ENCODE measurements at regions of chr2 and their contacts with region 1.

Region 1: GRCh38 chr2:70340921-70341765 is 39.3 kb upstream of the FAM136A start:
- DNase-seq: peak; percentile 44
- H3K4me3 Mint-ChIP-seq: no peak overlapping the region
- H3K27ac Mint-ChIP-seq: no peak overlapping the region
- H3K4me1 Mint-ChIP-seq: no peaks in the 10 kb centered on the region
- H3K27me3 Mint-ChIP-seq: peaks cover 1% of the 10 kb centered on the region

Region 2: DNA sequence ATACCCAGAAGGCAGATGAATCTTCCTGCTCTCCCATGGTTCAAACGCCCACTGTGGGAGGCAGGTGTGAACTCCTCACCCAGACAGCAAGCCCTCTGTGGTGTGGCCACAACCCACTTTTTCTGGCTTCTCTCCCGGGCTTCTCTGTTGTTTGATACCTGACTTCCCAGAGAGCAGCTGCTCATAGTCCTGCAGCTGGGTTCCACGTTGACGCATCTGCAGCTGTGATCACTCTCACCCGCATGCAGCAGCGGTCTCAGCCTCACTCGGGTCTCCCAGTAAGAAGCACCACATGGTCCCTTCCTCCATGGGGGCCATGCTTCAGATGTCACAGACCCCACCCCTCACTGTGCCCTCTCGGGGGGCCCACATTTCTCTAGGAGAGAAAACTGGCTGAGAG is 383.2 kb before region 1 on chr2:
- CTCF ChIA-PET with region 1: no interaction called
- POLR2A ChIA-PET with region 1: no interaction called
- intact Hi-C with region 1: no loop called
- DNase-seq: no peak
- H3K4me3 Mint-ChIP-seq: no peak overlapping the region
- H3K27ac Mint-ChIP-seq: no peak overlapping the region
- H3K4me1 Mint-ChIP-seq: no peaks in the 10 kb centered on the region
- H3K27me3 Mint-ChIP-seq: peaks cover 2% of the 10 kb centered on the region

Region 3: GRCh38 chr2:70607121-70607561 is 266.0 kb after region 1 on chr2:
- CTCF ChIA-PET with region 1: interaction called, 10 read pairs
- POLR2A ChIA-PET with region 1: no interaction called
- intact Hi-C with region 1: no loop called
- DNase-seq: no peak
- H3K4me3 Mint-ChIP-seq: no peak overlapping the region
- H3K27ac Mint-ChIP-seq: no peak overlapping the region
- H3K4me1 Mint-ChIP-seq: no peaks in the 10 kb centered on the region
- H3K27me3 Mint-ChIP-seq: peaks cover 2% of the 10 kb centered on the region

Region 4: GRCh38 chr2:70647873-70648481 is 306.8 kb after region 1 on chr2:
- CTCF ChIA-PET with region 1: interaction called, 6 read pairs
- POLR2A ChIA-PET with region 1: no interaction called
- intact Hi-C with region 1: loop called (anchors 1 kb)
- DNase-seq: peak; percentile 83
- H3K4me3 Mint-ChIP-seq: no peak overlapping the region
- H3K27ac Mint-ChIP-seq: no peak overlapping the region
- H3K4me1 Mint-ChIP-seq: no peaks in the 10 kb centered on the region
- H3K27me3 Mint-ChIP-seq: no peaks in the 10 kb centered on the region